ENCODE measurements at regions of chr12 and their contacts with region 1.

Region 1: GRCh38 chr12:65306366-65307168 is 28.1 kb downstream of the MSRB3 start:
- DNase-seq: peak; percentile 75
- ATAC-seq: peak; percentile 62
- H3K4me3 ChIP-seq: no peak overlapping the region
- H3K27ac ChIP-seq: peak overlapping the region; percentile 83
- H3K4me1 ChIP-seq: peaks cover 17% of the 10 kb centered on the region
- H3K27me3 ChIP-seq: no peaks in the 10 kb centered on the region
- CTCF ChIP-seq: peak; percentile 72
- POLR2A ChIP-seq: no peak
- RAD21 ChIP-seq: peak; percentile 78

Region 2: DNA sequence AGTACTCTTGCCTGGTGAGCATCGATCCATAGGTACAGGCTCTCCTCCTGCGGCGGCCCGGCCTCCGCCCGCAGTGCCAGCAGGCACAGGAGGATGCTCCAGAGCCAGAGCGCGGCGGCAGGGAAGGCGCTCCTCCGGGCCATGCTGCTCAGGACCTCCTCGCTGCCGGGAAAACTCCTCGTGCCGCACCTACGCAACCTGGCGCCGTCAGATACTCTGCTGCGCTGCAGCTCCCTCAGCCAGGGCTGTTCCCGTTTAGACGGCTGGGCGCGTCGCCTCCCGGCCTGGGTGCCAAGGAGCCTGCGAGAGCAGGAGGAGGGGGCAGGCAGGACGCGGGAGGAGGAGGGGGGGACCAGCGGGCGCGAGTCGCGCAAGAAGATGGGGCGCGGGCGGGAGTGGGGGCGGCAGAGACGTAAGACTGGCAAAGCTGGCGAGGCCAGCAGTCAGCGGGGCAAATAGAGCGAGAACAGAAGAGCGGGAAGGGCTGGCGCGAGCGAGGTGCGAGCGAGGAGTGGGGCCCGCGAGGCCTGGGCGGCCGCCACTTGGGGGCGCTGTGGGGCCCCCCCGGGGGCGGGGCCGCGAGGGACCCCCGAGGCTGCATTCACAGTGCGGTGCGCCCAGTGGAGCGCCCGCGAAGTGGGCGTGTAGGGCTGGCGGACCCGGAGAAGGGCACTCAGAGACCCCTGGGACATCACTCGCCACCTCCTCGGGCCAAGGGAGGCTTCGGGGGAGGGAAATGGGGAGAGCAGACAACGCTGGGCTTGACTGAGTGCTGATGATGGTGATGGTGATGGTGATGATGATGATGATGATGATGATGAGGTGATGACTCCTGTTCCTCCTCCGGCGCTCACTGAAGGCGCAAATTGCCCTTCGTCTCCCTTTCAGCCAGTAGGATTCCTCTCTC is 185.3 kb before region 1 on chr12 and contains the start of gene WIF1:
- CTCF ChIA-PET with region 1: no interaction called
- POLR2A ChIA-PET with region 1: no interaction called
- dilution Hi-C with region 1: no loop called
- in situ Hi-C with region 1: no loop called
- intact Hi-C with region 1: no loop called
- DNase-seq: no peak
- ATAC-seq: peak; percentile 51
- H3K4me3 ChIP-seq: peak within 1 kb of the TSS; percentile 25; the same call in 1 of the 2 replicates
- H3K27ac ChIP-seq: no peak within 1 kb of the TSS
- H3K4me1 ChIP-seq: peaks cover 3% of the 10 kb centered on the region
- H3K27me3 ChIP-seq: peaks cover 49% of the 10 kb centered on the region
- CTCF ChIP-seq: peak; percentile 32; the same call in 1 of the 2 replicates
- POLR2A ChIP-seq: no peak
- RAD21 ChIP-seq: no peak
- total RNA-seq, gene WIF1: not detected in 2 replicates

Region 3: GRCh38 chr12:65740873-65741600 is 434.5 kb after region 1 on chr12:
- CTCF ChIA-PET with region 1: no interaction called
- POLR2A ChIA-PET with region 1: no interaction called
- dilution Hi-C with region 1: no loop called
- in situ Hi-C with region 1: no loop called
- intact Hi-C with region 1: loop called (anchors 10 kb)
- DNase-seq: peak; percentile 74
- ATAC-seq: peak; percentile 98
- H3K4me3 ChIP-seq: peak overlapping the region; percentile 83
- H3K27ac ChIP-seq: peak overlapping the region; percentile 76
- H3K4me1 ChIP-seq: peaks cover 2% of the 10 kb centered on the region; the same call in 1 of the 2 replicates
- H3K27me3 ChIP-seq: no peaks in the 10 kb centered on the region
- CTCF ChIP-seq: no peak
- POLR2A ChIP-seq: peak; percentile 52; the same call in 1 of the 2 replicates
- RAD21 ChIP-seq: no peak

Region 4: DNA sequence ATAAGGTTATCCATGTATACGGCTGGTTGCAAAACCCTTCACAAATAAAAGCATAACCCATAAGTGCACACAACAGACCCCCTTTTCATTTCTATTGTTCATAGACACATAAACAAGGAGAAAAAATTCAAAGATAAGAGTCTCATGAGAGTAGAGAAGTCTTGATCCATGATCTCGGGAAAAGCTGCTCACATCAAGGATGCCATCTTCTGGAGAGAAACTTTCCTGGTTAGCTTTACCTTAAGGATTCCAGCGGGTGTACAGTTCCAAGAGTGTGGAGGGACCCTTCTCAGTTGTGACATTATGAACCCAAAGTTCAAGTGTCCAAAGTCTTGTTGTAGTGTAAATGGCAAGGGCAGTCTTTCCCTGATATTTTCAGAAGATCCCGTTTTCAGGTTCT is 679.5 kb after region 1 on chr12:
- CTCF ChIA-PET with region 1: no interaction called
- POLR2A ChIA-PET with region 1: no interaction called
- dilution Hi-C with region 1: no loop called
- in situ Hi-C with region 1: no loop called
- intact Hi-C with region 1: loop called (anchors 5 kb)
- DNase-seq: no peak
- ATAC-seq: no peak
- H3K4me3 ChIP-seq: no peak overlapping the region
- H3K27ac ChIP-seq: no peak overlapping the region
- H3K4me1 ChIP-seq: no peaks in the 10 kb centered on the region
- H3K27me3 ChIP-seq: no peaks in the 10 kb centered on the region
- CTCF ChIP-seq: no peak
- POLR2A ChIP-seq: no peak
- RAD21 ChIP-seq: no peak

Region 5: DNA sequence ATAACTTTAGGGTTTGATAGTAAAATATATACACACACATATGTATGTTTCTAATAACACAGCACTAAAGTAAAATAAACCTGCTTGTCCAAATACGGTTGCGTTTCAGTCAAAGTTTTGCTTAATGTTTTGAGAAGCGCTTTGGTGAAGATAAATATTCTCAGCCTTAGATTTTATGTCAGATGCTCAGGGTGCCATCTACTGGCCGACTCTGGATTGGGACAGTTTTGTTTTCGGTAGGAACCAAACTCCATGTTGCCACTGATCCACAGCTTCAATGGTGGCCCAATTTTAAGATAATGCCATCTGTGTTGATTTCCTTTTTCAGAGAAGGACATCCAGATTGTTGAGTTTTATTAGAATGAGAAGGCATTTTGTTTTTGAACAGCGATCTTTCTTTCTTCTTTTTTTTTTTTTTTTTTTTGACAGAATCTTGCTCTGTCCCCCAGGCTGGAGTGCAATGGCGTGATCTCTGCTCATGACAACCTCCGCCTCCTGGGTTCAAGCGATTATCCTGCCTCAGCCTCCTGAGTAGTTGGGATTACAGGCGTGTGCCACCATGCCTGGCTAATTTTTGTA is 780.9 kb after region 1 on chr12:
- CTCF ChIA-PET with region 1: no interaction called
- POLR2A ChIA-PET with region 1: no interaction called
- dilution Hi-C with region 1: no loop called
- in situ Hi-C with region 1: loop called (anchors 10 kb)
- intact Hi-C with region 1: loop called (anchors 1 kb)
- DNase-seq: peak; percentile 88
- ATAC-seq: peak; percentile 93
- H3K4me3 ChIP-seq: no peak overlapping the region
- H3K27ac ChIP-seq: no peak overlapping the region
- H3K4me1 ChIP-seq: peaks cover 4% of the 10 kb centered on the region
- H3K27me3 ChIP-seq: no peaks in the 10 kb centered on the region
- CTCF ChIP-seq: peak; percentile 89
- POLR2A ChIP-seq: peak; percentile 30; the same call in 1 of the 2 replicates
- RAD21 ChIP-seq: peak; percentile 91